Right cardiac atrium (tissue), 5 donors: ENCODE measurements at regions of chr11 and their contacts with region 1.

Region 1: DNA sequence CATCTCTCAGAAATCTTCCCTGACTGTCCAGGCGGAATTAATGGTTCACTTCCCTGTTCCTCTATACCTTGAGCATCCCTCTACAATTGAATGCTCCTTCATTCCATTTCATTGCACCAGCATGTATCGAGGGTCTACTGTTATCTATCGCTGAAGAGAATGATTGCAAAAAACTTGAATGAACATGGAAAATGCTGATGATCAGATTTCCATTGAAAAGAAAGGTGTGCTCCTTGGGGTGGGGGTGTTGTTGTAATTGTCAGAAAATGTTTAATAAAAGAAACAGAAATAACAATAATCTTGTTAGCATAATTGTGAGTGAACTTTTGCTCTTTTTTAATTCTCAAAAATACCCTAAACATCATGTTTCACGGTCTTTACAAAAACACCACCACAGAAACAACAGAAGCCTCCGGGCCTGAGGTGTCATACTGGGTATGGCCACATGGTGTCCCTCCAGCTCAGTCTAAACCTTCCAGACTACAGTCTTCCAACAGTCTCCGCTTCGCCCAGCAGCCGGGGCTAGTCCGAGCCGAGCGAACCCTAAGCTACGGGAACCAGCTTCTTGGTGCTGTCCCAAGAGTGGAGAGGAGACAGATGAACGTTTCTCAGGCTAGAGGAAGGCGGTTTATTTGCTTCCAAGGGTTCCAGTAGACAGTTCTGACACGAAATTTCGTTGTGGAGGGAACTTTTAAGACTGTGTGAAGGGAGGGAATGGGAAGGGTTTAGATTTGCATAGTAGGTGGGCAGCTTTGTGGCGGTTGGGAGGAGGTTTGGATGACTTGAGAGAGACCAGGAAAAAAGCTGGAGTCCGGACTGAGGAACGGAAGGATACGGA is 75.8 kb upstream of the ZBED5 start:
- DNase-seq: peak; percentile 90 to 96 (median 95)
- ATAC-seq: peak; percentile 87 to 90
- H3K4me3 ChIP-seq: peak overlapping the region; percentile 52
- H3K27ac ChIP-seq: peak overlapping the region; percentile 83
- H3K4me1 ChIP-seq: peaks cover 2% of the 10 kb centered on the region
- H3K27me3 ChIP-seq: no peaks in the 10 kb centered on the region

Region 2: DNA sequence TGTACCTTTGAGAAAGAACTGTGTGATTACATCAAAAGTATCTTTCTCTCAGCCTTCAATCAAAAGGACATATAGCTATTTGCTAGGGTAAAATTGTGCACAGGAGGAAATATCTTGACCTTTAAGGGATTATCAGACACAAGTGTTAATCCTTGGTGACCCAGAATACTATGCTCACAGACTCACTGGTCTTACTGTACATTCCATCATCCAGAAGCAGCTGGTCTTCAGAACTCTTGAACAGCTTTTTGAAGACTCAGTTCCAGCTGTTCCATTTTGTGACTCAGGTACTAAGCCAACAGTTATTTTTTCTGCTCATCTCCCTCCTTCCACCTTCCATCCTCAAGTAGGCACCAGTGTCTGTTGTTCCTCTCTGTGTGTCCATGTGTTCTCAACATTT is 95.6 kb before region 1 on chr11:
- intact Hi-C with region 1: no loop called
- DNase-seq: no peak
- ATAC-seq: no peak
- H3K4me3 ChIP-seq: no peak overlapping the region
- H3K27ac ChIP-seq: no peak overlapping the region
- H3K4me1 ChIP-seq: no peaks in the 10 kb centered on the region
- H3K27me3 ChIP-seq: no peaks in the 10 kb centered on the region

Region 3: GRCh38 chr11:10857709-10858438 is 75.8 kb before region 1 on chr11 and contains the start of gene ZBED5:
- intact Hi-C with region 1: loop called in 2 of 4 experiments (anchors 2 to 5 kb)
- DNase-seq: peak; percentile 97 to 99 (median 99)
- ATAC-seq: peak; percentile 98
- H3K4me3 ChIP-seq: peak within 1 kb of the TSS; percentile 73
- H3K27ac ChIP-seq: peak within 1 kb of the TSS; percentile 99
- H3K4me1 ChIP-seq: no peaks in the 10 kb centered on the region
- H3K27me3 ChIP-seq: no peaks in the 10 kb centered on the region
- total RNA-seq, gene ZBED5: 40.6 to 46.7 (median 44.2) TPM

Region 4: GRCh38 chr11:11022125-11022730 is 88.6 kb after region 1 on chr11:
- intact Hi-C with region 1: loop called in 3 of 4 experiments (anchors 2 to 5 kb)
- DNase-seq: no peak
- ATAC-seq: peak in 1 of 2 donors; percentile 23
- H3K4me3 ChIP-seq: no peak overlapping the region
- H3K27ac ChIP-seq: no peak overlapping the region
- H3K4me1 ChIP-seq: no peaks in the 10 kb centered on the region
- H3K27me3 ChIP-seq: no peaks in the 10 kb centered on the region